ENCODE measurements at regions of chr16 and their contacts with region 1.

Region 1: DNA sequence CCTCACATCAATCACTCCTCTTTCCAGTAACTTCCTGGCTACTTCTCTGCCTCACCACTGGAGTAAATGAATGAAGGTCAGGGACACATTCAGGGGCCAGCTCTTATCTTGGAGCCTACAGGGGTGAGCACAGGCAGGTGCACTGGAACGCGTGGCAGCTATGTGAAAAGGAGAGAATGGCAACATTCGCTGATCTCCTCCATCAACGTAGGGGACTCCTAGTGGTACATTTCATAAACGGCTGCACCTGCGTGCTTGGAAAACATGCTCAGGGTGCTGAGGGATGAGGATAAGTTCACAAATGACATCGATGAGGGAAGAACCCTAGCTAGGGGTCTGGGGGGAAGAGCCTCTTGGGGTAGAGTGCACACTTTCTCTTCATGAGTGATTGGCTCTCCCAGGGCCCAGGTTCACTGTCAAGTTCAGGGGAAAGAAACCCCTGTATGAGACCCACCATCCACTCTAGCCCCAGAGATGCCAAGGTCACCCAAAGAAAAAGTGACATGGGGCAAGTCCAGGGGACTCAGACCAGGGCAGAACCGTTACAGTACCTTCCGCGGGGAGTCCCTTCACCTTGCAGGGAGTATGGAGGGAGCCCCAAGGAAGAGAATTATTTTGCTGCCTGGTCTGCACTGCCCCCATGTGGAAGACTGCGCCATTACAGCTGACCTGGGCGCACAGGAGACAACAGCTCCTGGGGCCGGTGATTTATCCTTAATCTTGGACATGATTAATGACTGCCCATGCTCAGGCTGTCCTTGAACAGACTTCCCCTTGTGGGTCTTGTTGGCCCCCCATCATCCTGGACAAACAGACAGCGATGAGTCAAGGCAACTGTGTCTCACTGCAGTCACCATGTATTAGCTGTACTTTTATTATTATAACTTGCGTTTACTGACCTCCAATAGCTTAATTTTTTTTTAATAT is 30.1 kb downstream of the VAC14 start:
- DNase-seq: peak; percentile 54
- ATAC-seq: peak; percentile 94
- H3K4me3 ChIP-seq: no peak overlapping the region
- H3K27ac ChIP-seq: no peak overlapping the region
- H3K4me1 ChIP-seq: peaks cover 7% of the 10 kb centered on the region
- H3K27me3 ChIP-seq: no peaks in the 10 kb centered on the region
- CTCF ChIP-seq: peak; percentile 93
- POLR2A ChIP-seq: no peak
- RAD21 ChIP-seq: peak; percentile 98

Region 2: GRCh38 chr16:70529051-70529777 is 241.7 kb before region 1 on chr16:
- CTCF ChIA-PET with region 1: interaction called, 3 read pairs
- POLR2A ChIA-PET with region 1: no interaction called
- dilution Hi-C with region 1: no loop called
- in situ Hi-C with region 1: loop called (anchors 10 kb)
- intact Hi-C with region 1: loop called (anchors 2 kb)
- DNase-seq: peak; percentile 79
- ATAC-seq: peak; percentile 76
- H3K4me3 ChIP-seq: no peak overlapping the region
- H3K27ac ChIP-seq: peak overlapping the region; percentile 8; the same call in 1 of the 2 replicates
- H3K4me1 ChIP-seq: peaks cover 6% of the 10 kb centered on the region
- H3K27me3 ChIP-seq: no peaks in the 10 kb centered on the region
- CTCF ChIP-seq: peak; percentile 74
- POLR2A ChIP-seq: no peak
- RAD21 ChIP-seq: peak; percentile 64

Region 3: DNA sequence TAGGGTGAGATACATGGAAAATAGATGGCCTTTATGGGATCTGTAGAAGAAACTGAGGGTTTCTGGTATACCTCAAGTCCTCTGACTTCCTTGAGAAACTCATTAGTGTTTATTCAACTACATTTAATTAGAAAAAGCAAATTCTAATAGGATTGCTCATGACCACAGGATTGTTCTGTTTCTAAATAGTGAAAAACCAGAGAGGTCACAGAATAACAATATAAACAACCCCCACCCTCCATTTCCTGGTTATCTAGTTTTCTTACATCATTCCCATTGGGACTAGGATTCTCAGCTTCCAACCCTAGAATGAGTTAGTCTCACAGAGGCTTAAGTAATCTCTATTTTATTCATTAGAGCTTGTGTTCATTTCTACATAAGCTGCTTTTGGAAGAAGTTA is 217.2 kb before region 1 on chr16:
- CTCF ChIA-PET with region 1: no interaction called
- POLR2A ChIA-PET with region 1: no interaction called
- dilution Hi-C with region 1: no loop called
- in situ Hi-C with region 1: no loop called
- intact Hi-C with region 1: loop called (anchors 10 kb)
- DNase-seq: peak; percentile 94
- ATAC-seq: peak; percentile 85
- H3K4me3 ChIP-seq: no peak overlapping the region
- H3K27ac ChIP-seq: peak overlapping the region; percentile 91
- H3K4me1 ChIP-seq: peaks cover 27% of the 10 kb centered on the region
- H3K27me3 ChIP-seq: no peaks in the 10 kb centered on the region
- CTCF ChIP-seq: no peak
- POLR2A ChIP-seq: no peak
- RAD21 ChIP-seq: no peak

Region 4: GRCh38 chr16:70685938-70686375 is 84.9 kb before region 1 on chr16 and contains the start of gene MTSS2:
- CTCF ChIA-PET with region 1: interaction called, 5 read pairs
- POLR2A ChIA-PET with region 1: no interaction called
- dilution Hi-C with region 1: no loop called
- in situ Hi-C with region 1: loop called (anchors 5 kb)
- intact Hi-C with region 1: loop called (anchors 1 kb)
- DNase-seq: peak; percentile 85
- ATAC-seq: peak; percentile 70
- H3K4me3 ChIP-seq: peak within 1 kb of the TSS; percentile 90
- H3K27ac ChIP-seq: peak within 1 kb of the TSS; percentile 92
- H3K4me1 ChIP-seq: peaks cover 61% of the 10 kb centered on the region
- H3K27me3 ChIP-seq: no peaks in the 10 kb centered on the region
- CTCF ChIP-seq: 0 out of 2 replicates have a peak, but pooled peaks have one; percentile 2
- POLR2A ChIP-seq: no peak
- RAD21 ChIP-seq: no peak
- total RNA-seq, gene MTSS2: 8.9 and 9.1 TPM in 2 replicates

Region 5: GRCh38 chr16:70759666-70760065 is 11.2 kb before region 1 on chr16:
- CTCF ChIA-PET with region 1: interaction called, 12 read pairs
- POLR2A ChIA-PET with region 1: no interaction called
- dilution Hi-C with region 1: no loop called
- in situ Hi-C with region 1: no loop called
- intact Hi-C with region 1: no loop called
- DNase-seq: no peak
- ATAC-seq: no peak
- H3K4me3 ChIP-seq: no peak overlapping the region
- H3K27ac ChIP-seq: peak overlapping the region; percentile 90
- H3K4me1 ChIP-seq: peaks cover 20% of the 10 kb centered on the region
- H3K27me3 ChIP-seq: no peaks in the 10 kb centered on the region
- CTCF ChIP-seq: no peak
- POLR2A ChIP-seq: no peak
- RAD21 ChIP-seq: no peak

Region 6: GRCh38 chr16:70809396-70810060 is 38.6 kb after region 1 on chr16:
- CTCF ChIA-PET with region 1: no interaction called
- POLR2A ChIA-PET with region 1: no interaction called
- dilution Hi-C with region 1: no loop called
- in situ Hi-C with region 1: no loop called
- intact Hi-C with region 1: no loop called
- DNase-seq: no peak
- ATAC-seq: no peak
- H3K4me3 ChIP-seq: no peak overlapping the region
- H3K27ac ChIP-seq: no peak overlapping the region
- H3K4me1 ChIP-seq: peaks cover 6% of the 10 kb centered on the region; the same call in 1 of the 2 replicates
- H3K27me3 ChIP-seq: peaks cover 2% of the 10 kb centered on the region; the same call in 1 of the 2 replicates
- CTCF ChIP-seq: no peak
- POLR2A ChIP-seq: no peak
- RAD21 ChIP-seq: no peak

Measured in IMR-90 (cell line).